ENCODE measurements at regions of chr12 and their contacts with region 1.

Region 1: DNA sequence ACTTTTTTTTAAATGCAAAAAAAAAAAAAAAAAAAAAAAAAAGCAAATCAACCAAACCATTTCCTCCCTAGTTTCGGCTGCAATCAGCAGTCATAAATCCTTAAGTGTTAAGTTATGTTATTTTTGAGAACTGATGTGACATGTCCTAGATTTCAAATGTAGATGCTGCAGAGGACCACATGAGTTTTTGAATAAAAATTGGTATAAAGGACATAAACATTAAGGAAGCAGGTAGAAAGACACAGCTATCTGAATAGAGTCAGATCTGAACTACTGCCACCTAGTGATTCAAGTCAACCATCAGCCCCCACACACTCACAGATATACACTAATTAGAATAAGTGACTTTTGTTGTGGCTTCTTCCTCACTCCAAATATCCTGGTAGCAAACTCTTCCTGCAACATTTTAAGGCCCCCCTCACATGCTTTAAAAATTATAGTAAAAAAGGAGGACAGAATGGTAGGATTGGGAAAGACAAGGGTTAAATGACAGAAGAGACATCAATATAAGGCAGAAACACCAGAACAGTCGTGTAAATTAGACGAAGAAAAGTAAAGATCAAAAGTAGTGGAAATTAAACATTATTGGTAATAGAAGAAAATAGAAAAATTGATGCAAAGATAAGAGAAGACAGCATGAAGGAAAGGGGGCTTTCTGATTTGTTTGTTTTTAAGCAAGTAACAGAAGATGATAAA is 394.5 kb upstream of the ATP2B1 start:
- DNase-seq: no peak
- ATAC-seq: peak; percentile 75
- H3K4me3 Mint-ChIP-seq: peak overlapping the region; percentile 66
- H3K27ac Mint-ChIP-seq: peak overlapping the region; percentile 43
- H3K4me1 Mint-ChIP-seq: peaks cover 29% of the 10 kb centered on the region
- H3K27me3 Mint-ChIP-seq: no peaks in the 10 kb centered on the region
- CTCF ChIP-seq: no peak

Region 2: GRCh38 chr12:89768586-89769486 is 334.3 kb before region 1 on chr12:
- CTCF ChIA-PET with region 1: no interaction called
- POLR2A ChIA-PET with region 1: no interaction called
- intact Hi-C with region 1: no loop called
- DNase-seq: no peak
- ATAC-seq: peak; percentile 40
- H3K4me3 Mint-ChIP-seq: no peak overlapping the region
- H3K27ac Mint-ChIP-seq: peak overlapping the region; percentile 41
- H3K4me1 Mint-ChIP-seq: peaks cover 20% of the 10 kb centered on the region
- H3K27me3 Mint-ChIP-seq: no peaks in the 10 kb centered on the region
- CTCF ChIP-seq: no peak

Region 3: GRCh38 chr12:90091021-90091651 is 12.0 kb before region 1 on chr12:
- CTCF ChIA-PET with region 1: interaction called, 3 read pairs
- POLR2A ChIA-PET with region 1: no interaction called
- intact Hi-C with region 1: loop called (anchors 1 kb)
- DNase-seq: no peak
- ATAC-seq: no peak
- H3K4me3 Mint-ChIP-seq: no peak overlapping the region
- H3K27ac Mint-ChIP-seq: no peak overlapping the region
- H3K4me1 Mint-ChIP-seq: peaks cover 12% of the 10 kb centered on the region
- H3K27me3 Mint-ChIP-seq: no peaks in the 10 kb centered on the region
- CTCF ChIP-seq: no peak